ENCODE measurements at regions of chr4 and their contacts with region 1.

Region 1: GRCh38 chr4:125314676-125315575 is at the start of gene FAT4:
- DNase-seq: peak; percentile 81 to 84
- H3K4me3 ChIP-seq: peak within 1 kb of the TSS; percentile 48 to 96 (median 78)
- H3K27ac ChIP-seq: no peak within 1 kb of the TSS
- H3K4me1 ChIP-seq: peaks cover 5 to 17% (median 7%) of the 10 kb centered on the region in 4 experiments; a peak in 6 of 7 replicates
- H3K27me3 ChIP-seq: peaks cover 8 to 35% (median 28%) of the 10 kb centered on the region in 4 experiments
- CTCF ChIP-seq: no peak
- EP300 ChIP-seq: peak in 1 of 2 experiments; percentile 9; a peak in 1 of 3 replicates
- POLR2A ChIP-seq: no peak
- RAD21 ChIP-seq: peak in 1 of 2 experiments; percentile 9; a peak in 2 of 4 replicates
- total RNA-seq, gene FAT4: 5.0 and 5.3 TPM in 2 replicates

Region 2: GRCh38 chr4:125276811-125277210 is 38.1 kb before region 1 on chr4:
- CTCF ChIA-PET with region 1: no interaction called
- POLR2A ChIA-PET with region 1: no interaction called
- DNase-seq: no peak
- H3K4me3 ChIP-seq: no peak overlapping the region
- H3K27ac ChIP-seq: no peak overlapping the region
- H3K4me1 ChIP-seq: no peaks in the 10 kb centered on the region
- H3K27me3 ChIP-seq: no peaks in the 10 kb centered on the region
- CTCF ChIP-seq: no peak
- EP300 ChIP-seq: no peak
- POLR2A ChIP-seq: no peak
- RAD21 ChIP-seq: no peak

Region 3: GRCh38 chr4:125432104-125432503 is 117.2 kb after region 1 on chr4:
- CTCF ChIA-PET with region 1: interaction called, 12 read pairs
- POLR2A ChIA-PET with region 1: no interaction called
- DNase-seq: peak in 1 of 2 experiments; percentile 25
- H3K4me3 ChIP-seq: no peak overlapping the region
- H3K27ac ChIP-seq: no peak overlapping the region
- H3K4me1 ChIP-seq: no peaks in the 10 kb centered on the region
- H3K27me3 ChIP-seq: no peaks in the 10 kb centered on the region
- CTCF ChIP-seq: peak; percentile 58 to 65 (median 65)
- EP300 ChIP-seq: no peak
- POLR2A ChIP-seq: no peak
- RAD21 ChIP-seq: peak; percentile 66 to 73

Region 4: GRCh38 chr4:125750828-125751466 is 436.0 kb after region 1 on chr4:
- CTCF ChIA-PET with region 1: interaction called, 29 read pairs
- POLR2A ChIA-PET with region 1: no interaction called
- DNase-seq: peak in 1 of 2 experiments; percentile 23
- H3K4me3 ChIP-seq: no peak overlapping the region
- H3K27ac ChIP-seq: no peak overlapping the region
- H3K4me1 ChIP-seq: peaks cover 0 to 3% (median 0%) of the 10 kb centered on the region in 4 experiments; a peak in 1 of 7 replicates
- H3K27me3 ChIP-seq: no peaks in the 10 kb centered on the region
- CTCF ChIP-seq: peak; percentile 30 to 73 (median 69)
- EP300 ChIP-seq: no peak
- POLR2A ChIP-seq: no peak
- RAD21 ChIP-seq: peak; percentile 95 to 97

Measured in H1 (cell line).